ENCODE measurements at regions of chr11 and their contacts with region 1.

Region 1: DNA sequence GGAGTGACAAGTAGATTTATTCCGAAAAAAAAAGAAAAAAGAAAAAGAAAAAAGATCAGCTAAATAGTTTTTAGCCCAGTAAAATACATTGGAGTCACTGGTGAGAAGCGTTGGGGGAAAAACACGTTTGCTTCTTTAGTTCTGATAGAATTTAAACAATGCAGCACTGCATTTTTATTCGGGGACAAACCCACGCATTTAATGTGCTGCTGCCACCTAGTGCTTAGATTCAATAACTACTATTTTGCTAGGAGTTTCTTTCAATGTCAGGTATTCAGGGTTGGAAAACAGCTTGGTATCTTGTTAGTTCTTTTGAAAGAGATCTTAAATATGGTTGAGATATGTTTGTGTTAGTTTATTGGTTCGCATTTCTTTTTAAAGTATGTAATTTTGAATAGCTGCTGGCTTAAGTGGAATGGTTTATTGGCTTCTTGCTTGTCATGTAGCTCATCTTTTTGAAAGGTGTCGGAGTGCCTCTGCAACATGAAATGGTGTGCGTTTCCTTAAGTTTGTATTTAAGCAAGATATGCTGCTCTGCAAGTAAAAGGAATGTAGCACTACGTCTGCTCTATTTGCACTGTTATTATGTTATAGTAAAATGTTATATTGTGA is 41.9 kb downstream of the SVIP start:
- DNase-seq: no peak

Region 2: GRCh38 chr11:22752908-22753310 is 34.7 kb before region 1 on chr11:
- intact Hi-C with region 1: loop called in 1 of 2 experiments (anchors 1 kb)
- DNase-seq: no peak

Region 3: GRCh38 chr11:22822203-22822602 is 34.5 kb after region 1 on chr11:
- intact Hi-C with region 1: no loop called
- DNase-seq: no peak